GM12878 (cell line): ENCODE measurements at regions of chr19 and their contacts with region 1.

Region 1: DNA sequence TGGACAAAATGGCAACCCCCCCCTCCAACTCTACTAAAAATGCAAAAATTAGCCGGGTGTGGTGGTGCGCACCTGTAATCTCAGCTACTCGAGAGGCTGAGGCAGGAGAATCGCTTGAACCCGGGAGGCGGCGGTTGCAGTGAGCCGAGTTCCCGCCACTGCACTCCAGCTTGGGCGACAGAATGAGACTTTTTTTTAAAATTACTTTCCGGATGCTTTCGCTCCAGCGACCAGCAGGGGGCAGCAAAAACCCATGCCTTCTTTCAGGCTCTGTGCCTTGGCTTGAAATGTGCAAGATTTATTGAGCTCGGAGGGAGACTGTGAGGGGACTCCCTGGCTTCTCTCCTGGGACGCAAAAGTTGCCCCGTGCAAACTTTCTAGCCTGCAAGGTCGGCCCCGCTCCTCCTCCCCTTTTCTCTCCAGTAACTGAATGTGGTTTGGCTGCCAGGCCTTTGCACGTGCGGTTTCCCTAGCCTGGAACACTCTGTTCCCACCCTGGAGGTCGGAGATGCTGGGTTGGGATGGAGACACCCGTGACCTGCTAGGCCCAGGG is 61.4 kb upstream of the NFIC start:
- DNase-seq: peak; percentile 27
- ATAC-seq: peak; percentile 77
- H3K4me3 ChIP-seq: no peak overlapping the region
- H3K27ac ChIP-seq: no peak overlapping the region
- H3K4me1 ChIP-seq: no peaks in the 10 kb centered on the region
- H3K27me3 ChIP-seq: no peaks in the 10 kb centered on the region
- CTCF ChIP-seq: peak; percentile 72 to 86 (median 75)
- EP300 ChIP-seq: no peak
- POLR2A ChIP-seq: no peak
- RAD21 ChIP-seq: peak; percentile 80

Region 2: DNA sequence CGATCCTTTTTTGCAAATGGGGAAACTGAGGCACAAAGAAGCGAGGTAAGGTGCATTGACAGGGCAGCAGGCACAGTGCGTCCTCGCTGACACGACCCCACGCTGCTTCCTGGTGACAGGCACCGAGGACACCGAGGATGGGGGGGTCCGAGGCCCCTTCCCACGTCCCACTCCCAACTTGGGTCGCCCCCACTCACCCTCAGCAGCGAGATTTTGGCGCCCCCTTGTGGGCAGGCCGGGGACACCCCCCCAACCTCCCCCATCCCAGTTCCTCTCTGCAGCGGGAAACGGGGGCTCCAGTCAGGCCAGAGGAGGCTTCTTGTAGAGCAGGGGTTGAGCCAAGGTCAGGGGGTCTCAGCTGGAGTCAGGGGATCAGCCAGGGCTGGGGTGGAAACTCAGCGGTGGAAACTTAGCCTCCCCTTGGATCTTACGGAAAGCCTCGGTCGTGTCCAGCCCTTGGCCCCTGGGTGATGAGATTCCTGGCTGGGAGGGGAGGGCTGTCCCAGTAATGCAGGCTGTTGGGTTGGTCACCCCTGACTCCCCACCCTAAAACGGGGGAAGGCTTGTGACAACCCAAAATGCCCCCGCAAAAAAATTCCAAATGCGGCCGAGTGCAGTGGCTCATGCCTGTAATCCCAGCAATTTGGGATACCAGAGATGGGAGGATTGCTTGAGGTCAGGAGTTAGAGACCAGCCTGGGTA is 167.2 kb after region 1 on chr19:
- CTCF ChIA-PET with region 1: interaction called, 20 read pairs
- POLR2A ChIA-PET with region 1: no interaction called
- RAD21 ChIA-PET with region 1: interaction called, 6 read pairs
- SMC1A ChIA-PET with region 1: interaction called, 4 read pairs
- in situ Hi-C with region 1: no loop called
- intact Hi-C with region 1: no loop called
- DNase-seq: no peak
- ATAC-seq: peak; percentile 66
- H3K4me3 ChIP-seq: no peak overlapping the region
- H3K27ac ChIP-seq: no peak overlapping the region
- H3K4me1 ChIP-seq: no peaks in the 10 kb centered on the region
- H3K27me3 ChIP-seq: no peaks in the 10 kb centered on the region
- CTCF ChIP-seq: peak; percentile 61 to 81 (median 61)
- EP300 ChIP-seq: no peak
- POLR2A ChIP-seq: no peak; the same call in 1 of the 2 replicates
- RAD21 ChIP-seq: peak; percentile 56

Region 3: DNA sequence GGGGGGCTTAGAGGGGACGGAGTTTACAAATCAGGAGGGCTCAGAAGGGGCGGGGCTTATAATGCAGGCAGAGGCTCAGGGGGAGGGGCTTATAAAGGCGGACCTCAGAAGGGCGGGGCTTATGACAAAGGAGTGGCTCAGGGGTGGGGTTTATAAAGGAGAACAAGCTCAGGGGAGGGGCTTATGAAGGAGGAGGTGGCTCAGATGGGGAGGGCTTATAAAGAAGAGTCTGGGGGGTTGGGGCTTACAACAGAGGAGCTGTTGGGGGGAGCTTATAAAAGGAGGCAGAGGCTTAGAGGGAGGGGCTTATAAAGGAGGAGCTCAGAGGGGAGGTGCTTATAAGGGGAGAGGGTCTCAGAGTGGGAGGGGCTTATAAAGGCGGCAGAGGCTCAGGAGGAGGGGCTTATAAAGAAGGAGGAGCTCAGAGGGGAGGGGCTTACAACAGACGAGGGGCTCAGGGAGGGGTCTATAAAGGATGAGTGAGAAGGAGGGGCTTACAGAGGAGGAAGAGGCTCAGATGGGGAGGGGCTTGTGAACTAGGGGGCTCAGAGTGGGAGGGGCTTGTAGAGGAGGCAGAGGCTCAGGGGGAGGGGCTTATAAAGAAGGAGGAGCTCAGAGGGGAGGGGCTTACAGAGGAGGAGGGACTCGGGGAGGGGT is 174.4 kb after region 1 on chr19:
- CTCF ChIA-PET with region 1: interaction called, 9 read pairs
- POLR2A ChIA-PET with region 1: no interaction called
- RAD21 ChIA-PET with region 1: interaction called, 4 read pairs
- SMC1A ChIA-PET with region 1: no interaction called
- in situ Hi-C with region 1: no loop called
- intact Hi-C with region 1: loop called (anchors 2 kb)
- DNase-seq: no peak
- ATAC-seq: peak; percentile 67
- H3K4me3 ChIP-seq: no peak overlapping the region
- H3K27ac ChIP-seq: no peak overlapping the region
- H3K4me1 ChIP-seq: no peaks in the 10 kb centered on the region
- H3K27me3 ChIP-seq: peaks cover 0 to 2% of the 10 kb centered on the region in 2 experiments; a peak in 3 of 4 replicates
- CTCF ChIP-seq: no peak
- EP300 ChIP-seq: no peak
- POLR2A ChIP-seq: no peak
- RAD21 ChIP-seq: no peak

Region 4: DNA sequence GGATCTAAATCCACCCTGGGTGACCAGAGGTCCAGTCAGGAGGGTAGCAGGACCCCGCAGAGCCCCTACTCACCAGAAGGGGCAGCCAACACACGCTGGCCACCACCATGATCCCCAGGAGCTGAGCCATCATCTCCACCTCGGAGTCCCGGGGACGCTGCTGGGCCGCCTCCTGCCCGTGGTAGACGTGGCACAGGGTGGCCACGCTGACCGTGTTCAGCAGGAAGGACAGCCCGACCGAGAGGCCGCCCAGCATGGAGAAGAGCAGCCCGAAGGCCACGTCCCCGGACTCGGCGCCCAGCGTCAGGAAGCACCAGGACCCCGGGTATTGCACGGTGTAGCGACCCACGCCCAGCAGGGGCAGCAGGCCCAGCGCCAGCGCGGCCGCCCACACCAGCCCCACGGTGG is 294.8 kb after region 1 on chr19:
- CTCF ChIA-PET with region 1: no interaction called
- POLR2A ChIA-PET with region 1: no interaction called
- RAD21 ChIA-PET with region 1: no interaction called
- SMC1A ChIA-PET with region 1: no interaction called
- in situ Hi-C with region 1: no loop called
- intact Hi-C with region 1: no loop called
- DNase-seq: no peak
- ATAC-seq: no peak
- H3K4me3 ChIP-seq: no peak overlapping the region
- H3K27ac ChIP-seq: no peak overlapping the region
- H3K4me1 ChIP-seq: peaks cover 3% of the 10 kb centered on the region
- H3K27me3 ChIP-seq: no peaks in the 10 kb centered on the region
- CTCF ChIP-seq: 0 out of 6 replicates have a peak, but pooled peaks of 1 of the 3 experiments have one; percentile 2
- EP300 ChIP-seq: no peak
- POLR2A ChIP-seq: no peak
- RAD21 ChIP-seq: no peak